IMR-90 (cell line): ENCODE measurements at regions of chr12 and their contacts with region 1.

Region 1: DNA sequence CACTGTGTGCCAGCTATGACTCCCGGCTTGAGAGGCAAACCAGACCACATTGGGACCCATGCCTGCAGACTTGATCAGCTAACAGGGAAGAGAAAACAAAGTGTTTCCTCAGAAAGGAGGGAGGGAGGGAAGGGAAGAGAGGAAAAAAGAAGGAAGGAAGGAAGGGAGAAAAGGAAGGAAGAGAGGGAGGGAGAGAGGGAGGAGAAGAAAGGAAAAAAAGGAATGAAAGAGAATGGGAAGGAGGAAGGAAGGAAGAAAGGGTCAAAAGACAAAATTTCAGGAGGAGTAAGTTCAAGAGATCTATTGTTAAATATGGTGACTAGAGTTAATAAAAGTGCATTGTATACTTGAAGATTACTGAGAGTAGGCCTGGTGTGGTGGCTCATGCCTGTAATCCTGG is 18.9 kb downstream of the FIGNL2 start:
- DNase-seq: no peak
- ATAC-seq: no peak
- H3K4me3 ChIP-seq: no peak overlapping the region
- H3K27ac ChIP-seq: no peak overlapping the region
- H3K4me1 ChIP-seq: no peaks in the 10 kb centered on the region
- H3K27me3 ChIP-seq: peaks cover 41% of the 10 kb centered on the region
- CTCF ChIP-seq: no peak
- POLR2A ChIP-seq: no peak
- RAD21 ChIP-seq: no peak

Region 2: GRCh38 chr12:51840966-51841365 is 11.3 kb after region 1 on chr12:
- CTCF ChIA-PET with region 1: no interaction called
- POLR2A ChIA-PET with region 1: interaction called, 11 read pairs
- dilution Hi-C with region 1: no loop called
- in situ Hi-C with region 1: no loop called
- intact Hi-C with region 1: no loop called
- DNase-seq: no peak
- ATAC-seq: no peak
- H3K4me3 ChIP-seq: no peak overlapping the region
- H3K27ac ChIP-seq: no peak overlapping the region
- H3K4me1 ChIP-seq: no peaks in the 10 kb centered on the region
- H3K27me3 ChIP-seq: peaks cover 88% of the 10 kb centered on the region
- CTCF ChIP-seq: no peak
- POLR2A ChIP-seq: no peak
- RAD21 ChIP-seq: no peak